ENCODE measurements at regions of chr5 and their contacts with region 1.

Region 1: GRCh38 chr5:142108432-142109330 is at the start of gene NDFIP1:
- DNase-seq: peak; percentile 84 to 90 (median 88)
- H3K4me3 ChIP-seq: peak within 1 kb of the TSS; percentile 78 to 80
- H3K4me3 Mint-ChIP-seq: peak within 1 kb of the TSS; percentile 94 to 100 (median 96)
- H3K27ac ChIP-seq: peak within 1 kb of the TSS; percentile 95
- H3K27ac Mint-ChIP-seq: peak within 1 kb of the TSS; percentile 95 to 99 (median 99)
- H3K4me1 ChIP-seq: peaks cover 71% of the 10 kb centered on the region
- H3K4me1 Mint-ChIP-seq: peaks cover 46 to 76% (median 56%) of the 10 kb centered on the region in 4 donors
- H3K27me3 ChIP-seq: no peaks in the 10 kb centered on the region
- H3K27me3 Mint-ChIP-seq: no peaks in the 10 kb centered on the region
- total RNA-seq, gene NDFIP1: 73.8 to 78.4 TPM

Region 2: GRCh38 chr5:141821361-141821925 is 287.2 kb before region 1 on chr5:
- CTCF ChIA-PET with region 1: no interaction called
- POLR2A ChIA-PET with region 1: no interaction called
- intact Hi-C with region 1: no loop called
- DNase-seq: no peak
- H3K4me3 ChIP-seq: no peak overlapping the region
- H3K4me3 Mint-ChIP-seq: no peak overlapping the region
- H3K27ac ChIP-seq: no peak overlapping the region
- H3K27ac Mint-ChIP-seq: no peak overlapping the region
- H3K4me1 ChIP-seq: no peaks in the 10 kb centered on the region
- H3K4me1 Mint-ChIP-seq: peaks cover 0 to 3% (median 0%) of the 10 kb centered on the region in 4 donors
- H3K27me3 ChIP-seq: no peaks in the 10 kb centered on the region
- H3K27me3 Mint-ChIP-seq: peaks cover 4 to 13% of the 10 kb centered on the region in 2 donors

Region 3: GRCh38 chr5:142012792-142013388 is 95.8 kb before region 1 on chr5 and contains the start of gene GNPDA1:
- CTCF ChIA-PET with region 1: interaction called, 93 read pairs
- POLR2A ChIA-PET with region 1: interaction called, 40 read pairs
- intact Hi-C with region 1: loop called (anchors 1 kb)
- DNase-seq: peak; percentile 56 to 72 (median 62)
- H3K4me3 ChIP-seq: peak within 1 kb of the TSS; percentile 79 to 84
- H3K4me3 Mint-ChIP-seq: peak within 1 kb of the TSS; percentile 86 to 94 (median 88)
- H3K27ac ChIP-seq: peak within 1 kb of the TSS; percentile 70
- H3K27ac Mint-ChIP-seq: peak within 1 kb of the TSS; percentile 91 to 96 (median 95)
- H3K4me1 ChIP-seq: peaks cover 64% of the 10 kb centered on the region
- H3K4me1 Mint-ChIP-seq: peaks cover 44 to 71% (median 56%) of the 10 kb centered on the region in 4 donors
- H3K27me3 ChIP-seq: no peaks in the 10 kb centered on the region
- H3K27me3 Mint-ChIP-seq: no peaks in the 10 kb centered on the region
- total RNA-seq, gene GNPDA1: 23.0 to 24.1 TPM

Region 4: DNA sequence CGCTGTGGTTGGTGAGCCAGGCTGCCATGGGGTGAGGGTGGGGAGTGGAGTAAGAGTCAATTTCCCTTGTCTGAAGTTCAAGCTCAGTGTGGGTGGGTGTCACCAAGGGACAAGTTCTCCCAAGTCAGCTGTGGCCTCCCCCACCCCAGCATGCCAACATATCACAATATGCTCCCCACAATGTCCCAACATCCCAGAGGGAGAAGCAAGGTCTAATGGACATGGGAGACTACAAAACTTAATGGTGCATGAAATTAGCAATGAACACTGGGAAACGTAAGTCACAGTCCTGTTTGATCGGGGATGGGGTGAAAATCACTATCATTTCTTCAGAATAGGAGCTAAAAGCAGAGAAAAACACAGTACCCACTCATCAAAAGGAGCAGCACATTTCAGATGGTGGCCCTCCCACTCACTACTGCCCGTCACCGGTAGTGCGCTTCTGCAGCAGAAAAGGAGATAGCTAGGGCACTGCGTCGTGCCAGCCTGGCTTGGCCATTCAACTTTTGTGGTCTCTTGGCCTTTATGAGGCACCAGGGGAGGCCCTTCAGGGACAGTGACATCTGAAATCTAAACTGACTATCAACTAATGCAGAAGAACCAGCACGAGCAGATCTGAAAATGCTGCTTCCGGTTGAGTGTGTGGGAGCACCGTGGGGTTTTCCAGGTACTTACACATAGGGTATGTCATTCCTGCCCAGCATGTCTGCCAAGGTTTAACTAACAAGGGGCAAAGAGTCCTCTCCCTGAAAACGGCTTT is 20.6 kb before region 1 on chr5:
- CTCF ChIA-PET with region 1: interaction called, 44 read pairs
- POLR2A ChIA-PET with region 1: interaction called, 96 read pairs
- intact Hi-C with region 1: no loop called
- DNase-seq: peak; percentile 41 to 73 (median 53)
- H3K4me3 ChIP-seq: peak overlapping the region; percentile 3 to 23
- H3K4me3 Mint-ChIP-seq: peak overlapping the region; percentile 71 to 86 (median 79)
- H3K27ac ChIP-seq: peak overlapping the region; percentile 60
- H3K27ac Mint-ChIP-seq: peak overlapping the region; percentile 84 to 97 (median 95)
- H3K4me1 ChIP-seq: peaks cover 28% of the 10 kb centered on the region
- H3K4me1 Mint-ChIP-seq: peaks cover 20 to 31% (median 25%) of the 10 kb centered on the region in 4 donors
- H3K27me3 ChIP-seq: no peaks in the 10 kb centered on the region
- H3K27me3 Mint-ChIP-seq: no peaks in the 10 kb centered on the region

Region 5: GRCh38 chr5:142120247-142120935 is 11.7 kb after region 1 on chr5:
- CTCF ChIA-PET with region 1: interaction called, 8 read pairs
- POLR2A ChIA-PET with region 1: interaction called, 15 read pairs
- intact Hi-C with region 1: loop called (anchors 1 kb)
- DNase-seq: no peak
- H3K4me3 ChIP-seq: no peak overlapping the region
- H3K4me3 Mint-ChIP-seq: peak overlapping the region; percentile 2 to 73 (median 62)
- H3K27ac ChIP-seq: no peak overlapping the region
- H3K27ac Mint-ChIP-seq: peak overlapping the region; percentile 24 to 86 (median 74)
- H3K4me1 ChIP-seq: peaks cover 86% of the 10 kb centered on the region
- H3K4me1 Mint-ChIP-seq: peaks cover 59 to 89% (median 78%) of the 10 kb centered on the region in 4 donors
- H3K27me3 ChIP-seq: no peaks in the 10 kb centered on the region
- H3K27me3 Mint-ChIP-seq: no peaks in the 10 kb centered on the region

Region 6: GRCh38 chr5:142145106-142145900 is 36.6 kb after region 1 on chr5:
- CTCF ChIA-PET with region 1: interaction called, 8 read pairs
- POLR2A ChIA-PET with region 1: interaction called, 10 read pairs
- intact Hi-C with region 1: loop called (anchors 2 kb)
- DNase-seq: peak; percentile 54 to 66 (median 57)
- H3K4me3 ChIP-seq: no peak overlapping the region
- H3K4me3 Mint-ChIP-seq: no peak overlapping the region
- H3K27ac ChIP-seq: no peak overlapping the region
- H3K27ac Mint-ChIP-seq: no peak overlapping the region
- H3K4me1 ChIP-seq: no peaks in the 10 kb centered on the region
- H3K4me1 Mint-ChIP-seq: no peaks in the 10 kb centered on the region
- H3K27me3 ChIP-seq: no peaks in the 10 kb centered on the region
- H3K27me3 Mint-ChIP-seq: no peaks in the 10 kb centered on the region

Measured in CD4-positive, alpha-beta memory T cell (primary cell).